A673 (cell line): ENCODE measurements at regions of chr5 and their contacts with region 1.

Region 1: DNA sequence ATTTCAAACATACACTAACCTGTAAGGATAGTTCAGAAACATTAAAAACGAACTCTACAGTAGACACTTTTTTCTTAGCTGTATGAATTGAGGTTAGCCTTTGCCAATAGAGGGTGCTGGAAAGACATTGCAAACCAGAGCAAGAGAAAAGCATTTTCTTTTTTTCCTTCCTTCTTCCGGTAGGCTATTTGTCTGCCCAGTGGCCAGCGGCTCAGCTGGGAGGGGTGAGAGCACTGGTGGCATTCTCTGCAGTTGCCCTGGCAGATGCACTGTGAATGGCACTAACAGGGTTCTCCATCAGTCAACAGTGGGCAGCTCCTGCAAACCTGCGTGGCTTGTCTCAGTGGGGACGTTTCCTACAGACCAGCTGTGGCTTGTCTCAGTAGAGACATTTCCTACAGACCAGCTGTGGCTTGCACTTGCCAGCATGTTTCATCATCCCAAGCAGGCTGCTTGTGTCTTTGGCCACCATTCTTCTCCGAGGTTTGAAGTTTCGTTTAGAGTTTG is 984.5 kb upstream of the CDH18 start:
- DNase-seq: peak; percentile 80
- H3K4me3 ChIP-seq: peak overlapping the region; percentile 40
- H3K27ac ChIP-seq: no peak overlapping the region
- H3K4me1 ChIP-seq: peaks cover 28% of the 10 kb centered on the region
- H3K27me3 ChIP-seq: peaks cover 29% of the 10 kb centered on the region
- CTCF ChIP-seq: peak; percentile 74

Region 2: DNA sequence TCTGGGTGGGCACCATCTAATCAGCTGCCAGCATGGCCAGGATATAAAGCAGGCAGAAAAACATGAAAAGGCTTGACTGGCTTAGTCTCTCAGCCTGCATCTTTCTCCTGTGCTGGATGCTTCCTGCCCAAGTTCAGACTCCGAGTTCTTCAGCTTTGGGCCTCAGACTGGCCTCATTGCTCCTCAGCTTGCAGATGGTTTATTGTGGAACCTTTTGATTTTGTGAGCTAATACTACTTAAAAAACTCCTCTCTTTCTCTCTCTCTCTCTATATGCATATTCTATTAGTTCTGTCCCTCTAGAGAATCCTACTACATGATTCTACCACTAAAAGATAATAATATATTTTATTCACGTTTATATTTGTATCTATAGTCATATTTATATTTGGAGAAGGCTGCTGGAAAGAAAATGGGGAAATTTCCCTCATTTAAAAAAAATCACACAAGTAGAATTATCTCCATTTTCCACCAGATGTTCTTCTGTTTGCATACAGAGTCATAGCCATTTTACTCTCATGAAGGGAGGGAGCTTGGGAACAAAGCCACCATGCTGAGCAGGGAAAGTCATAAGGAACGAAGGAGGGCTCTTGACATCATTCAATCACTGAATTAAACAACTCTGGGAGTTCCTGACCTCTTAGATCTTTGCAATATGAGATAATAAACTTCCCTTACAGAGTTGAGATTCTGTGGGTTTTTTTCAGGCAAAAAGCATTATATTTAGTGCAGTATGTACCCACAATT is 152.9 kb after region 1 on chr5:
- CTCF ChIA-PET with region 1: no interaction called
- POLR2A ChIA-PET with region 1: no interaction called
- intact Hi-C with region 1: loop called (anchors 10 kb)
- DNase-seq: peak; percentile 75
- H3K4me3 ChIP-seq: no peak overlapping the region
- H3K27ac ChIP-seq: no peak overlapping the region
- H3K4me1 ChIP-seq: peaks cover 3% of the 10 kb centered on the region
- H3K27me3 ChIP-seq: no peaks in the 10 kb centered on the region
- CTCF ChIP-seq: no peak

Region 3: GRCh38 chr5:21152610-21153009 is 180.1 kb after region 1 on chr5:
- CTCF ChIA-PET with region 1: no interaction called
- POLR2A ChIA-PET with region 1: no interaction called
- intact Hi-C with region 1: loop called (anchors 2 kb)
- DNase-seq: peak; percentile 96
- H3K4me3 ChIP-seq: no peak overlapping the region
- H3K27ac ChIP-seq: peak overlapping the region; percentile 51
- H3K4me1 ChIP-seq: peaks cover 19% of the 10 kb centered on the region
- H3K27me3 ChIP-seq: no peaks in the 10 kb centered on the region
- CTCF ChIP-seq: no peak

Region 4: DNA sequence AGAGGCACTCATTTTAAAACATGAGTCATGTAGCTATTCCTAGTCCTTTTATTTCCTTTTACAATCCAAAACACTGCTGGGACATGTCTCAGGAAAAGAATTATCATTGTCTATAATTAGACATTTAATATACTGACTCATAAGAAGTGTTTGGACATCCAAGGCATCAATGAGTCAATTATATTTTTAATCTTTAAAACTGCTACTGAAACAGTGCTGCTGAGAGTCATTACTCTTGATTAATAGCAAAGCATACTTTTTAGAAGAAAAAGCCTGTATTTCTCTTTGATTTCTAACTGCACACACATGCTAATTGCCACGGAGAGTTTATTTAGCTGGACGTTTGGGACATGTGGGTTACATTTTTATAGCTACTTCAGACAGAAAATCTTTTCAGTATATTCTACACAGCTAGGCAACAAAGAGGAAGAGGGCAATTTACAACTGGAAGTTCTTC is 264.5 kb after region 1 on chr5:
- CTCF ChIA-PET with region 1: no interaction called
- POLR2A ChIA-PET with region 1: no interaction called
- intact Hi-C with region 1: loop called (anchors 2 kb)
- DNase-seq: peak; percentile 83
- H3K4me3 ChIP-seq: no peak overlapping the region
- H3K27ac ChIP-seq: peak overlapping the region; percentile 82
- H3K4me1 ChIP-seq: peaks cover 22% of the 10 kb centered on the region
- H3K27me3 ChIP-seq: no peaks in the 10 kb centered on the region
- CTCF ChIP-seq: no peak

Region 5: DNA sequence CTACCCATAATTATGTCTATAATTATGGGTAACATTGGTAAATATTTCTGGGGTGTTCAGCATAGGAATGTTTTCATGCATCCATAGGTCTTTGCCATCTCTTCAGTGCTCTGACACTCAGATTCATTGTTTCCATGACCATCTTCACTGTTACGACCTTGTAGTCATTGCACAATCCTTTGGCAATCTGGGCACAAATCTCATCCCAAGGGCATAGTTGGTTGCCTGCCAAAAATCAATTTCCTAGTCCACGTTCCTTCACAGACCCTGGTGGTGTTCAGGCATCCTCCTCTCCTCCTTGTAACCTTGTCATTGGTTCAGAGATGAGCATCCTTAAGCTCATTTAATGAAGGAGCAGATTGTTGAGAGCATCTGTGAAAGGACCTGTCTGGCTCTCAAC is 480.0 kb after region 1 on chr5:
- CTCF ChIA-PET with region 1: no interaction called
- POLR2A ChIA-PET with region 1: no interaction called
- intact Hi-C with region 1: loop called (anchors 10 kb)
- DNase-seq: peak; percentile 37
- H3K4me3 ChIP-seq: no peak overlapping the region
- H3K27ac ChIP-seq: no peak overlapping the region
- H3K4me1 ChIP-seq: no peaks in the 10 kb centered on the region
- H3K27me3 ChIP-seq: no peaks in the 10 kb centered on the region
- CTCF ChIP-seq: no peak

Region 6: GRCh38 chr5:21802869-21803490 is 830.5 kb after region 1 on chr5:
- CTCF ChIA-PET with region 1: no interaction called
- POLR2A ChIA-PET with region 1: no interaction called
- intact Hi-C with region 1: loop called (anchors 5 kb)
- DNase-seq: peak; percentile 61
- H3K4me3 ChIP-seq: no peak overlapping the region
- H3K27ac ChIP-seq: no peak overlapping the region
- H3K4me1 ChIP-seq: peaks cover 4% of the 10 kb centered on the region
- H3K27me3 ChIP-seq: no peaks in the 10 kb centered on the region
- CTCF ChIP-seq: peak; percentile 69